ENCODE measurements at regions of chr15 and their contacts with region 1.

Region 1: DNA sequence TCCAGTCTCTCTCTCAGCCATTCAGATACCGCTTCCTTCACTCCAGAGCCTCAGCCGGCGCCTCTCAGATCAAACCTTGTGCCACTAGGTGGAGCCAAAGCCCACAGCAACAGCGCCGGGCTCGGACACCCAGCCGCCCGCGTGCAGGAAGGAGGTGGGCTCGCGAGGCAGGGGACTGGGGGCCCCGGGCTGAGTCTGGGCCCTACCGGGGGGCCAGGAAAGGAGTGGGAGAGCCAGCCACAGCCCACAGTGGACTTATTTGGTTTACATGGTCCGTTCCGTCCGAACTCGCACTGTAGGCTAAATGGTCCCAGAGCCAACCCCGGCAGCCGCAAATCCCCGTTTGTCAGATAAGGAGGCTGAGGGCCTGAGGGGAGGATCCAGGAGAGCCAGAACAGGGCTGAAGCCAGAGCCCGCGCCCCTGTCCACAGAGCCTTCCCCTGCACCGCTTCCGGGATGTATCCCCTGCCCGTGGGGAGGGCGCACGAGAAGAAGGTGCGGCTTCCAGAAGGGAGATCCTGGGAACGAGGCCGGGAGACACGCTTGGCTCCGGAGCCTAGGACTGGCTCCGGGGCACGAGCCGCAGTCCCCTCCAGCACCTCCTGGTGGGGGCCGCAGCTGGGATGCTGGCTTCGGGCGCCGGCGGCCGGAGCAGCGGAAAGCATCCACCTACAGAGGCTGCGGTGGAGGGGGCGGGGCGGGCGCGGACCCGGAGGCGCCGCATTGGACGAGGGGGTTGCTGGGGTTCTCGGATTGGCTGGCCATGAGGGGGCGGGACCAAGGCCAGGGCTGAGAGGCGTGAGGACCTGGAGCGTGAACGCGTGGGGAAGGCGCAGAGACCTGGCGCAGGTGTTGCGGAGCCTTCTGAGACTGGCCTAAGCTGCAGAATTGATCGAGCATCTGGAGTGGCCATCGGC is 6.5 kb upstream of the CYP11A1 start:
- DNase-seq: peak; percentile 92
- H3K4me3 ChIP-seq: peak overlapping the region; percentile 71
- H3K27ac ChIP-seq: peak overlapping the region; percentile 47
- H3K4me1 ChIP-seq: peaks cover 15% of the 10 kb centered on the region
- CTCF ChIP-seq: peak; percentile 92

Region 2: DNA sequence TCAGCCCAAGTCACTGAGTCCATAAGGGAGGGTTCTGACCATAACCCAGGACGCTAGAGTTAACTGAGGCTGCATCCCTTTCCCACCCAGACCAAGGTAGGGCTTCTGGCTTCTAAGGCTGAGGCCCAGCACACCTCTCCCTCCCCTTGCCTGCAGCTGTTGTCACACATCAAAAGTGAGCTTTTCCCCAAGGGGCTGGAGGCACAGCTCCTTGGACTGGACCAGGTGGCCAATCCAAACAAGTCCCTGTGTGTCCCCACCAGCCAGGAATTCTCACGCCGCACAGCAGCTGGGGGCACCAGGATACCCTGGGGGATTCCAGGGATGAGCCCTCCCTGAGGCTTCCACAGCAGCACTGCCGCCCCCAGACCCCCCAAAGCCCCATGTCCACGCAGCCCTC is 265.9 kb before region 1 on chr15:
- CTCF ChIA-PET with region 1: no interaction called
- POLR2A ChIA-PET with region 1: no interaction called
- intact Hi-C with region 1: no loop called
- DNase-seq: no peak
- H3K4me3 ChIP-seq: no peak overlapping the region
- H3K27ac ChIP-seq: no peak overlapping the region
- H3K4me1 ChIP-seq: no peaks in the 10 kb centered on the region
- CTCF ChIP-seq: no peak

Region 3: GRCh38 chr15:74438721-74439316 is 64.8 kb after region 1 on chr15:
- CTCF ChIA-PET with region 1: interaction called, 3 read pairs
- POLR2A ChIA-PET with region 1: no interaction called
- intact Hi-C with region 1: loop called (anchors 2 kb)
- DNase-seq: peak; percentile 84
- H3K4me3 ChIP-seq: no peak overlapping the region
- H3K27ac ChIP-seq: no peak overlapping the region
- H3K4me1 ChIP-seq: peaks cover 10% of the 10 kb centered on the region
- CTCF ChIP-seq: peak; percentile 98

Region 4: DNA sequence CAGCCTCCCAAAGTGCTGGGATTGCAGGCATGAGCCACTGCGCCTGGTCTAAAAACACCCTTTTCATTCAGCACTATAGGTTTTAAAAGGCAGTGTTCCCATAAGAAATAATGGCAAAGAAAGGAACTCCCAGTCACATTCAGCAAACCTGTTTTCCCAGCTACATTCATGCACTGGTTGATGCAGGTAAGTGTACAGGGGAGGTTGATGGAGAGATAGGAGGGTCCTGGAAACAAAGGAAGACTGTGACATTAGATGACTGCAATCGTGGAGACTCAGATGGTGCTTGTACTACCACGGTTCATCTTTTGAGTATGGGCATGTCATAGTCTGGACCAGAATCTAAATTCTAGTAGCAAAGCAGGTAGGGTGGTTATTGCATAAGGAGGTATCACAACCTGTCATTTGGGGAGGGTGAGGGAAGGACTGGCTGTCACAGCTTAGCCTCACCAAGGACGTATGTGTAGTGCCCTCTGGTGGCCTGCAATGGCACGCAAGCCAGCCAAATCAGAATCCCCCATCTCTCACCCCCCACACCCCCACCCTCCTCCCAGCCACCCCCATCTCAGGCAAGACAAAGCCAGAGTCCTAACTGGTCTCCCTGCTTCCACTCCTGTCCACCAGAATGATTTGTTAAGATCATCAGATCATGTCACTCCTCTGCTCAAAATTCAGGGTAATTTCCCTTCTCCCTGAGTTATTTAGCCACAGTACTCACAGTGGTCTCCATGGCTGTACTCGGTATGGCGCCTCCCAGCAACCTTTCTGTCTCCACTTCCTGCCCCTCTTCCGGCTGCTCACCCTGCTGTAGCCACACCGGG is 115.7 kb after region 1 on chr15:
- CTCF ChIA-PET with region 1: no interaction called
- POLR2A ChIA-PET with region 1: no interaction called
- intact Hi-C with region 1: loop called (anchors 1 kb)
- DNase-seq: peak; percentile 82
- H3K4me3 ChIP-seq: peak overlapping the region; percentile 50
- H3K27ac ChIP-seq: peak overlapping the region; percentile 35
- H3K4me1 ChIP-seq: peaks cover 6% of the 10 kb centered on the region
- CTCF ChIP-seq: peak; percentile 82

Region 5: DNA sequence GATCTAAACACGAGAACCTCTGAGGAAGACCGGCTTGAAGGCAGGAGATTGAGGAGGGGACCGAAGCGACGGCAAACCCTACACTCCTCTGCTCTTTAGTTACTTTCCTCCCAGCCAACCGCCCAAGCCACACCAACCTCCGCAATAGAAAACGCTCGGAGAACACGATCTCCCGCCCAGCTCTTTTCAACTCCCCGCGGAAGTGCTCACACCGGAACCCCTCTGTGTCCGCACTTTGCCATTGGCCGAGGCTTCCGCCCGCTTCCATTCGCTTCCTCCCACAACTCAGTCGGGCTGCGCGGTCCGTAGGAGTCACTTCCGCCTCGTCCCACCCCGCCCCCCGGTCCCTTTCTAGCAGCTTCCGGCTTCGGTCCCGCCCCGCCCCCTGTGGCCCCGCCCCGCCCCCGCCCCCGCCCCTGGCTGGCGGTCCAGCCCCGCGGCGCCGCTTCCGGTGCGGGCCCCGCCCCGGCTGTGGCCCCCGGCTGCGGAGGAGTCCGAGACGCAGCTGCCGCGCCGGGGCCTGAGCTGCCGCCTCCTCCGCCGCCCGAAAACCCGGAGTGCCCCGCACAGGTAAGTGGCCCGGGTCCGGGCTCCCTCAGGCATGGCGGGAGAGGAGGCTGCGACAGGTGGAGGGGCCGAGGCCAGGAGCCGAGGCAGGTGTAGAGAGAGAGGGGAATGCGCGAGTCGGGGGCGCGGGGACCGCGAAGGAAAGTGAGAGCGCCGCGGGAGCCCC is 166.9 kb after region 1 on chr15 and contains the start of gene ARID3B:
- CTCF ChIA-PET with region 1: no interaction called
- POLR2A ChIA-PET with region 1: no interaction called
- intact Hi-C with region 1: loop called (anchors 2 kb)
- DNase-seq: peak; percentile 98
- H3K4me3 ChIP-seq: peak within 1 kb of the TSS; percentile 91
- H3K27ac ChIP-seq: peak within 1 kb of the TSS; percentile 36
- H3K4me1 ChIP-seq: peaks cover 20% of the 10 kb centered on the region
- CTCF ChIP-seq: no peak
- total RNA-seq, gene ARID3B: 0.80 and 7.5 TPM in 2 replicates

Region 6: DNA sequence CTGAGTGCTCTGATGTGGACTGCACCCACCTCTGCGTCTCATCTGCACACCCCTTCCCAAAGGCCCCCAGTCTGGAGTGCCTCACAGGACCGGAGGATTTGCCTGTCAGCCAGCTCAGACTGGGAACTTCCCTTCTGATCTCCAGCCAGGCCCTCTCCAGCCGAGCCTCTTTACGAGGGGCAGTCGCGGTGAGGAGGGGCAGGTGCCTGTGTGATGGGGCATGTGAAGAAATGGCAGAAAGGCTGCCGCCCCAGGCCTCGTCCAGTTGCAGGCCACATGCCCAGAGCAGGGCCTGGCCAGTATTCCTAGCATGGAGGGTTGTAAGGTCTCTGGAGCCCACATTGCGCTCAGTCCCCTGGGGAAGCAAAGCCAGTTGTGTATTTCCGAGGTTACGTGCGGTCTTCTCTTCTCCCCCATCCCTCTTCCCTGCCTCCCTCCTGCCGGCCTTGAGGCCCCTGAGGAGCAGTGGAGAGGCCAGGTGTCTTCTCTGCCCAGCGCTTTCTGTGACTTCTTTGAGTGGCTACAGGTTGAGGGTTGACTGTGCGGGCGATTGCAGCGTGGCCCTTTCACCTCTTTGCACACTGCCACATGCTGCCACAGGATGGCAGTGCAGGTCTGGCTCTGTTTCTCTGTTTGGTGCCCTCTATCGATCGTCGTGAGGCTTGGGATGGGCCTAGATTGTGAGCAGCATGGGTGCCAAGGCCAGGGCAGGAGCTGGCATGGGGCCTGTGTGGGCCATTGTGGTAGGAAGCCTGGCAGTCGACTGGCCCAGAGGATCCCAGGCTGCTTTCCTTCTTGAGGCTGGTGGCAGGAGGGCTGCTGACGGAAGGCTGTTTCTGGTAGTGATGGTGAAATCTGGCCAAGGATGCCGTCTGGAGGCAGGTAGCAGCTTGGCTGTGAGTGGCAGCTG is 246.9 kb after region 1 on chr15:
- CTCF ChIA-PET with region 1: interaction called, 3 read pairs
- POLR2A ChIA-PET with region 1: no interaction called
- intact Hi-C with region 1: loop called (anchors 2 kb)
- DNase-seq: peak; percentile 82
- H3K4me3 ChIP-seq: no peak overlapping the region
- H3K27ac ChIP-seq: no peak overlapping the region
- H3K4me1 ChIP-seq: peaks cover 14% of the 10 kb centered on the region
- CTCF ChIP-seq: peak; percentile 99